Pancreas (tissue), 10 donors: ENCODE measurements at regions of chr16 and their contacts with region 1.

Region 1: GRCh38 chr16:69554495-69554894 is 11.3 kb upstream of the NFAT5 start:
- DNase-seq: no peak
- ATAC-seq: no peak
- H3K4me3 ChIP-seq: no peak overlapping the region
- H3K27ac ChIP-seq: no peak overlapping the region
- H3K4me1 ChIP-seq: no peaks in the 10 kb centered on the region
- H3K27me3 ChIP-seq: no peaks in the 10 kb centered on the region
- CTCF ChIP-seq: no peak

Region 2: DNA sequence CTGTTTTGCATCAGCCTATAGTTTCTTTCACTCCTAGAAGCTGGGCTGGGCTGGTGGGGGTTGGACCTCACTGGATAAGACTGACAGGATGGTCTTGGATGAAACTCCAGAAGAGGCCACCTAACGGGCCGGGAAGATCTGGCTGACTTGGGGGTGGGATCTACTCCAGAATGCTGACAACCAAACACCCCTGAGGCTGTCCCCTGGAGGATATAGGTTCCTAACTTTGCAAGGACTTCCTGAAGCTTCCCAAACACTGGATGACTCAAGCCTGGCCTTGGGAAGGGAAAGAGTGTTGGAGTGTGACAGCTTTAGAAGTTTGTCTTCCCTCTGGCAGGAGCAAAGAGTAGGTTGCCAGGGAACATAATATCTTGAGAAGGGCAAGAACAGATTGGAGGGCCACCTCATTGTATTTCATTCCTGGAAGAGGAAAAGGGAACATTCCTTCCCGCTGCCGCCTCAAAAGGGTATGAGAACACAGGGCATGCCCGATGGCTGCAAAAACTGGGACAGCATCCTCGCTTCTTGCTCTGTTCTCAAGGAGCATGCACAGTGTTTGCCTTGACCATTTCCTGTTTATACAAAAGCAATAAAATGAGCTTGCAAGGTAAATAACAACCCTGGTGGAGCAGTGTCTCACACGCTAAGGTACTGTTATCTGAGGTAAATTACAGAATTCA is 136.8 kb before region 1 on chr16:
- intact Hi-C with region 1: loop called in 1 of 3 experiments (anchors 10 kb)
- DNase-seq: no peak
- ATAC-seq: peak in 2 of 4 donors; percentile 18 to 46
- H3K4me3 ChIP-seq: no peak overlapping the region
- H3K27ac ChIP-seq: no peak overlapping the region
- H3K4me1 ChIP-seq: no peaks in the 10 kb centered on the region
- H3K27me3 ChIP-seq: no peaks in the 10 kb centered on the region
- CTCF ChIP-seq: no peak

Region 3: GRCh38 chr16:69453936-69454335 is 100.6 kb before region 1 on chr16:
- intact Hi-C with region 1: no loop called
- DNase-seq: no peak
- ATAC-seq: no peak
- H3K4me3 ChIP-seq: no peak overlapping the region
- H3K27ac ChIP-seq: no peak overlapping the region
- H3K4me1 ChIP-seq: peaks cover 0 to 8% (median 0%) of the 10 kb centered on the region in 3 donors
- H3K27me3 ChIP-seq: no peaks in the 10 kb centered on the region
- CTCF ChIP-seq: no peak

Region 4: DNA sequence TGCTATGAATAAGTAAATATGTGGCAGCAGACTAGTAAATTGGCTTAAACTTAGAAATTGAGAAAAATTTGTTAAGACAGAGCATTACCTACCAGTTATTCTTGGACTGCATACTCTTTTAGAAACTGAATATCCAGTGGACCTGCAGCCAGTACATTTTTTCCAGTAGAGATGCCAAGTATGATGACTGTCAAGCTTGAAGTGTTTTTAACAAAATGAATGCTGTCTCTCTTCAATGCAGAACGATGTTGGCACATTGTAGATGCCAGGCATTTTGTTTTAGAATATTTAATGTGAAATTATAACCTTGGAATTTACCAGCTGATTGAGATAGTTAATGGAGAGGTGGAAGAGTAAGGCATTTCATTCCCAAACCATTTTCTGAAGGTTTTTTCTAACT is 63.8 kb after region 1 on chr16:
- intact Hi-C with region 1: no loop called
- DNase-seq: no peak
- ATAC-seq: peak in 2 of 4 donors; percentile 26 to 32
- H3K4me3 ChIP-seq: no peak overlapping the region
- H3K27ac ChIP-seq: no peak overlapping the region
- H3K4me1 ChIP-seq: peaks cover 10 to 27% (median 25%) of the 10 kb centered on the region in 3 donors
- H3K27me3 ChIP-seq: no peaks in the 10 kb centered on the region
- CTCF ChIP-seq: no peak